ENCODE measurements at regions of chr1 and their contacts with region 1.

Region 1: GRCh38 chr1:151534665-151535278 is 5.3 kb upstream of the TUFT1 start:
- DNase-seq: peak; percentile 89
- H3K4me3 Mint-ChIP-seq: no peak overlapping the region
- H3K27ac Mint-ChIP-seq: no peak overlapping the region
- H3K4me1 Mint-ChIP-seq: peaks cover 28% of the 10 kb centered on the region
- H3K27me3 Mint-ChIP-seq: no peaks in the 10 kb centered on the region
- CTCF ChIP-seq: peak; percentile 95

Region 2: DNA sequence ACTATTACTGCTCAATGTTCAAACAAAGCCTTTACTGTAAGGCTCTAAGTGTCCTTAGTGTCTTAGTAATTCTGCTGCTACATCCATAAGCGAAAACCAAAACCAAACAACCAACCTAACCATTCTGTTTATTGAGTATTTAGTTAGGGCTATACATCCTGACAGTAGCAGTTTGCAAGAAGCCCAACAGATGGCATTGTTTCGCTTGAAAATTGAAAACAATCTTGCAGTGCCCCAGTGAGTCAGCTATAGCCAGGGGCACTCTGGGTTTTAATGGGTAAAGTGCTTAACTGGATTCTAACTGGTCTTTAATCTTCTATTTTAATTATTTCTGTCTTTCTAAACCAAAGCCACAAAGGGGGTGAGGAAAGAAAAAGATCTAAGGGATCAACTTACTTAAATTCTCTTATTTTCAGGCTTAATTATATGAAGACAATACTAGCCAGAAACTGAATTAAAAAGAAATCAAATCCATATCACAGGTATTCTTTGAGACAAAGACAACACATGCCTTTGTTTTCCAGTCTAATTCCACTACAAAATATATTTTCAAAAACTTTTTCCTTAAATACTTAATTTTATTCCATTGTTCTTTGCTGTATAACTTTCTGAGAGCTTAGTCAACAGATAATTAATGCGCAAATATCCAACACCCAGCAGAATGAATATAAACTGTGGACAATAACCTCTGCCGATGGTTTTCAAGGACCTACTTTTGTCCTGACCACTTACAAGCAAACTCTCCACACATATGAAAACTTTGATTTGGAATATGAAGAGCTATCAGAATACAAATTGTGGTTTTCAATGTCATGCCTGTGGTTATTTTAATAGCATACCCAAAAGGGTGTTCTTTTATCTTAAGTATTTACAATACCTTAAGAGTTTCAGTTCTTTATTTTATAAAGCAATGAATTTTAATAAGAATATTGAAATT is 90.7 kb before region 1 on chr1:
- CTCF ChIA-PET with region 1: interaction called, 6 read pairs
- POLR2A ChIA-PET with region 1: interaction called, 11 read pairs
- intact Hi-C with region 1: loop called (anchors 1 kb)
- DNase-seq: peak; percentile 94
- H3K4me3 Mint-ChIP-seq: no peak overlapping the region
- H3K27ac Mint-ChIP-seq: no peak overlapping the region
- H3K4me1 Mint-ChIP-seq: peaks cover 24% of the 10 kb centered on the region
- H3K27me3 Mint-ChIP-seq: no peaks in the 10 kb centered on the region
- CTCF ChIP-seq: peak; percentile 93

Region 3: DNA sequence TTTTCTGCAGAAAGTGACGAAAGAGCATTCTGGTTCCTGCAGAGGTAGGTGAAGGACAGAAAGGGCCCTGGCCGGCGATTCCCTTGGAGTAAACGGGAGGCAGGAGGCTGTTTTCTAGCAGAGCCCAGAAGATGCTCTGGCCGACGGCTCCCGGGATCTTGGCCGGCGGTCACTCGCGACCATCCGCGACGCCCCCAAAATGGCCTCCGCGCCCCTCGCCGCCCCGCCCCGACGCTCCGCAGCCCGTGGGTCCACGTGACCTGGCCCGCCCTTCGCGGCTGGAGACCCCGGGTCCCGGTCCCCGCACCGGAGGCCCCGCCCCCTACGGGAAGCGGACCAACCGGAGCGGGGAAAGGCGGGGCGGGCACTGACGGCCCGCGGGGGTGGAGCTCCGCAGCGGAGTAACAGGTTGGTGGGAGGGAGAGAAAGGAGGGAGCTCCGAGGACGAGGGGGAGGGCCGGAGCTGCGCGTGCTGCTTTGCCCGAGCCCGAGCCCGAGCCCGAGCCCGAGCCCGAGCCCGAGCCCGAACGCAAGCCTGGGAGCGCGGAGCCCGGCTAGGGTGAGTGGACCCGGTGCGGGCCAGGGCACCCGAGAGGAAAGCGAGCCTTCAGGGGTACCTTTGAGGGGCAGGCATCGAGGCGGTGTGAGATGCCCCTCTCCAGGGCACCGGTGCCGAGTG is 23.7 kb before region 1 on chr1 and contains the start of gene CGN:
- CTCF ChIA-PET with region 1: interaction called, 9 read pairs
- POLR2A ChIA-PET with region 1: interaction called, 20 read pairs
- intact Hi-C with region 1: loop called (anchors 2 kb)
- DNase-seq: peak; percentile 85
- H3K4me3 Mint-ChIP-seq: peak within 1 kb of the TSS; percentile 75
- H3K27ac Mint-ChIP-seq: no peak within 1 kb of the TSS
- H3K4me1 Mint-ChIP-seq: peaks cover 28% of the 10 kb centered on the region
- H3K27me3 Mint-ChIP-seq: peaks cover 17% of the 10 kb centered on the region
- CTCF ChIP-seq: no peak
- total RNA-seq, gene CGN: 0.32 and 0.33 TPM in 2 replicates

Region 4: GRCh38 chr1:151520359-151520758 is 14.4 kb before region 1 on chr1:
- CTCF ChIA-PET with region 1: interaction called, 10 read pairs
- POLR2A ChIA-PET with region 1: interaction called, 7 read pairs
- intact Hi-C with region 1: no loop called
- DNase-seq: no peak
- H3K4me3 Mint-ChIP-seq: no peak overlapping the region
- H3K27ac Mint-ChIP-seq: peak overlapping the region; percentile 49
- H3K4me1 Mint-ChIP-seq: peaks cover 9% of the 10 kb centered on the region
- H3K27me3 Mint-ChIP-seq: no peaks in the 10 kb centered on the region
- CTCF ChIP-seq: no peak

Region 5: GRCh38 chr1:151547119-151547899 is 12.5 kb after region 1 on chr1:
- CTCF ChIA-PET with region 1: interaction called, 9 read pairs
- POLR2A ChIA-PET with region 1: interaction called, 90 read pairs
- intact Hi-C with region 1: no loop called
- DNase-seq: peak; percentile 98
- H3K4me3 Mint-ChIP-seq: peak overlapping the region; percentile 51
- H3K27ac Mint-ChIP-seq: peak overlapping the region; percentile 67
- H3K4me1 Mint-ChIP-seq: peaks cover 71% of the 10 kb centered on the region
- H3K27me3 Mint-ChIP-seq: no peaks in the 10 kb centered on the region
- CTCF ChIP-seq: no peak

Region 6: GRCh38 chr1:151693076-151693651 is 158.4 kb after region 1 on chr1:
- CTCF ChIA-PET with region 1: interaction called, 4 read pairs
- POLR2A ChIA-PET with region 1: no interaction called
- intact Hi-C with region 1: loop called (anchors 1 kb)
- DNase-seq: peak; percentile 60
- H3K4me3 Mint-ChIP-seq: no peak overlapping the region
- H3K27ac Mint-ChIP-seq: peak overlapping the region; percentile 43
- H3K4me1 Mint-ChIP-seq: no peaks in the 10 kb centered on the region
- H3K27me3 Mint-ChIP-seq: no peaks in the 10 kb centered on the region
- CTCF ChIP-seq: peak; percentile 74

Measured in MCF 10A (cell line).